Naive thymus-derived CD4-positive, alpha-beta T cell (primary cell): ENCODE measurements at regions of chr12 and their contacts with region 1.

Region 1: GRCh38 chr12:68279227-68280054 is 26.0 kb upstream of the IL22 start:
- DNase-seq: no peak
- ATAC-seq: no peak
- H3K4me3 ChIP-seq: no peak overlapping the region
- H3K4me3 Mint-ChIP-seq: no peak overlapping the region
- H3K27ac ChIP-seq: no peak overlapping the region
- H3K27ac Mint-ChIP-seq: no peak overlapping the region
- H3K4me1 ChIP-seq: no peaks in the 10 kb centered on the region
- H3K4me1 Mint-ChIP-seq: peaks cover 0 to 53% (median 0%) of the 10 kb centered on the region in 7 donors
- H3K27me3 ChIP-seq: no peaks in the 10 kb centered on the region
- H3K27me3 Mint-ChIP-seq: peaks cover 0 to 2% (median 0%) of the 10 kb centered on the region in 5 donors

Region 2: DNA sequence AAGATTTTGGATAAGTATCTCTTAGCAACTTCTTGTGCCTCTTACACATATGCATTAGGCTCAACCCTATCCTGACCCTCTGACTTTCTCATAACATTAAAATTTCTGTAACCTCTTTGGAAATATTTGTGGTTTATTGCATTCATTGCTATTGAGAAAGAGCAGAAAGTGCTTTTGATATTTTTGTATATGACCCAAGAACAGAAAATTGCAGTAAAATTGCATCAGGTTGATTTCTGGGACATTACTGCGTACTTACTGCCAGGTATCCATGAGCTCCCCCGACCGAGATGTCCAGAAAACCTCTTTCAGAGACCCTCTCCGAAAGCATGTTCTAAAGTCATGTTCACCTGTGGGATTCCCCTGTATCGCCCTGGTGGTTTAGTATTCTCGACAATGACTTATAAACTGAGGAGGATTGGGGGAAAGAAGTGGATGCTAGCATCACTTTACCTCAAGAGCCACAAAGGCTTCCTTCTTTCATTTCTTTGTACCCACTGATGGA is 11.5 kb before region 1 on chr12:
- CTCF ChIA-PET with region 1: no interaction called
- POLR2A ChIA-PET with region 1: no interaction called
- intact Hi-C with region 1: loop called in 1 of 2 experiments (anchors 1 kb)
- DNase-seq: peak in 1 of 9 donors; percentile 33
- ATAC-seq: no peak
- H3K4me3 ChIP-seq: no peak overlapping the region
- H3K4me3 Mint-ChIP-seq: peak overlapping the region in 1 of 10 donors; percentile 61
- H3K27ac ChIP-seq: no peak overlapping the region
- H3K27ac Mint-ChIP-seq: peak overlapping the region in 1 of 9 donors; percentile 69
- H3K4me1 ChIP-seq: no peaks in the 10 kb centered on the region
- H3K4me1 Mint-ChIP-seq: peaks cover 0 to 49% (median 0%) of the 10 kb centered on the region in 7 donors
- H3K27me3 ChIP-seq: no peaks in the 10 kb centered on the region
- H3K27me3 Mint-ChIP-seq: peaks cover 0 to 8% (median 6%) of the 10 kb centered on the region in 5 donors

Region 3: GRCh38 chr12:68290126-68290525 is 10.7 kb after region 1 on chr12:
- CTCF ChIA-PET with region 1: no interaction called
- POLR2A ChIA-PET with region 1: no interaction called
- intact Hi-C with region 1: loop called in 1 of 2 experiments (anchors 1 kb)
- DNase-seq: peak in 4 of 9 donors; percentile 2 to 16 (median 14)
- ATAC-seq: peak; percentile 62
- H3K4me3 ChIP-seq: no peak overlapping the region
- H3K4me3 Mint-ChIP-seq: peak overlapping the region in 1 of 10 donors; percentile 64
- H3K27ac ChIP-seq: no peak overlapping the region
- H3K27ac Mint-ChIP-seq: peak overlapping the region in 1 of 9 donors; percentile 82
- H3K4me1 ChIP-seq: peaks cover 0 to 14% of the 10 kb centered on the region in 2 donors
- H3K4me1 Mint-ChIP-seq: peaks cover 0 to 39% (median 10%) of the 10 kb centered on the region in 7 donors
- H3K27me3 ChIP-seq: no peaks in the 10 kb centered on the region
- H3K27me3 Mint-ChIP-seq: peaks cover 0 to 1% (median 0%) of the 10 kb centered on the region in 5 donors